H1 (cell line): ENCODE measurements at regions of chr16 and their contacts with region 1.

Region 1: GRCh38 chr16:30609926-30610839 is at the start of gene ZNF689:
- DNase-seq: peak; percentile 98 to 99
- H3K4me3 ChIP-seq: peak within 1 kb of the TSS; percentile 88 to 98 (median 92)
- H3K27ac ChIP-seq: peak within 1 kb of the TSS; percentile 95
- H3K4me1 ChIP-seq: peaks cover 0 to 3% (median 2%) of the 10 kb centered on the region in 4 experiments; a peak in 3 of 7 replicates
- H3K27me3 ChIP-seq: no peaks in the 10 kb centered on the region
- CTCF ChIP-seq: no peak
- EP300 ChIP-seq: no peak
- POLR2A ChIP-seq: peak; percentile 78 to 86
- RAD21 ChIP-seq: 0 out of 4 replicates have a peak, but pooled peaks of 1 of the 2 experiments have one; percentile 1
- total RNA-seq, gene ZNF689: 14.2 and 14.3 TPM in 2 replicates

Region 2: GRCh38 chr16:30621765-30622164 is 11.6 kb after region 1 on chr16:
- CTCF ChIA-PET with region 1: interaction called, 74 read pairs
- POLR2A ChIA-PET with region 1: interaction called, 26 read pairs
- DNase-seq: no peak
- H3K4me3 ChIP-seq: no peak overlapping the region
- H3K27ac ChIP-seq: no peak overlapping the region
- H3K4me1 ChIP-seq: no peaks in the 10 kb centered on the region
- H3K27me3 ChIP-seq: no peaks in the 10 kb centered on the region; a peak in 2 of 7 replicates
- CTCF ChIP-seq: no peak
- EP300 ChIP-seq: no peak
- POLR2A ChIP-seq: no peak
- RAD21 ChIP-seq: no peak